ENCODE measurements at regions of chr17 and their contacts with region 1.

Region 1: DNA sequence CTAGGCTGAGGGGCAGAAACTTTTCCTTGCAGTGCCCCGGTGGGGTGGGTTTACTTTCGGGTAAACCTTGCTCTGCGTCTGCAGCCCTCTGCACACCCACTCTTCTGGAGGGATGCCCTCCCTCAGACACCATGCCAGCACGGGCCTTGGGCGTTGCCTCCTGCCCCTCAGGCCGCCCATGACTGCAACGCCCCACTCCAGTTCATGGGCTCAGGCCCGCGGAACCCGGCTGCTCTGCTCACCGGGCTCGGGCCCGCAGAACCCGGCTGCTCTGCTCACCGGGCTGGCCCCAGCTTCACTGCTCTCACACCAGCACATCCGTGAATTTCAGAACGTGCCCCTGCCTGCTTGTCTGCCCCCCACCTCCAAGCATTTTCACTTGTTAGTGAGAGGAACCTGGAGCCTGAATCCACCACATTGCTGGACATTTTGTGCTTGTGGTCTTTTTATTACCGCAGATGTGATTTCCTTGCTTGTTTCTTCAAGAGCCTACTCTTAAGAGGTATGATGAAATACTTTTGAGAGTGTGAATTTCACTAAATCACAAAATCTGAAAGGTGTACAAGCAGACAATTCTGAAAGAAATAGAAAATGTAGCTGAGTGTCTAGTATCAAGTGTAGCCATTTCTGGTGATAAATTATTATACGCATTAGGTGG is 130.9 kb downstream of the RPTOR start:
- DNase-seq: no peak
- ATAC-seq: no peak
- H3K4me3 ChIP-seq: no peak overlapping the region
- H3K4me3 Mint-ChIP-seq: peak overlapping the region in 2 of 10 donors; percentile 31 to 40
- H3K27ac ChIP-seq: no peak overlapping the region
- H3K27ac Mint-ChIP-seq: peak overlapping the region in 5 of 9 donors; percentile 2 to 93 (median 58)
- H3K4me1 ChIP-seq: peaks cover 4 to 23% of the 10 kb centered on the region in 2 donors
- H3K4me1 Mint-ChIP-seq: peaks cover 51 to 90% (median 82%) of the 10 kb centered on the region in 7 donors
- H3K27me3 ChIP-seq: no peaks in the 10 kb centered on the region
- H3K27me3 Mint-ChIP-seq: no peaks in the 10 kb centered on the region

Region 2: GRCh38 chr17:80732268-80732667 is 56.7 kb after region 1 on chr17:
- CTCF ChIA-PET with region 1: no interaction called
- POLR2A ChIA-PET with region 1: no interaction called
- intact Hi-C with region 1: loop called in 1 of 2 experiments (anchors 5 kb)
- DNase-seq: no peak
- ATAC-seq: no peak
- H3K4me3 ChIP-seq: no peak overlapping the region
- H3K4me3 Mint-ChIP-seq: peak overlapping the region in 2 of 10 donors; percentile 25
- H3K27ac ChIP-seq: no peak overlapping the region
- H3K27ac Mint-ChIP-seq: peak overlapping the region in 6 of 9 donors; percentile 15 to 96 (median 66)
- H3K4me1 ChIP-seq: peaks cover 7 to 15% of the 10 kb centered on the region in 2 donors
- H3K4me1 Mint-ChIP-seq: peaks cover 11 to 88% (median 73%) of the 10 kb centered on the region in 7 donors
- H3K27me3 ChIP-seq: no peaks in the 10 kb centered on the region
- H3K27me3 Mint-ChIP-seq: no peaks in the 10 kb centered on the region

Measured in naive thymus-derived CD4-positive, alpha-beta T cell (primary cell).